ENCODE measurements at regions of chr20 and their contacts with region 1.

Region 1: GRCh38 chr20:19974626-19975435 is 42.3 kb upstream of the NAA20 start:
- DNase-seq: peak; percentile 84 to 93
- H3K4me3 ChIP-seq: peak overlapping the region; percentile 93
- H3K27ac ChIP-seq: peak overlapping the region; percentile 95
- H3K4me1 ChIP-seq: peaks cover 47% of the 10 kb centered on the region
- H3K27me3 ChIP-seq: no peaks in the 10 kb centered on the region
- CTCF ChIP-seq: no peak

Region 2: GRCh38 chr20:19692685-19693119 is 282.1 kb before region 1 on chr20:
- CTCF ChIA-PET with region 1: no interaction called
- POLR2A ChIA-PET with region 1: no interaction called
- intact Hi-C with region 1: loop called (anchors 2 kb)
- DNase-seq: peak; percentile 70 to 72
- H3K4me3 ChIP-seq: peak overlapping the region; percentile 34; the same call in 1 of the 2 replicates
- H3K27ac ChIP-seq: peak overlapping the region; percentile 45
- H3K4me1 ChIP-seq: peaks cover 10% of the 10 kb centered on the region
- H3K27me3 ChIP-seq: no peaks in the 10 kb centered on the region
- CTCF ChIP-seq: peak; percentile 98

Region 3: GRCh38 chr20:19757487-19758132 is 217.2 kb before region 1 on chr20:
- CTCF ChIA-PET with region 1: interaction called, 4 read pairs
- POLR2A ChIA-PET with region 1: interaction called, 5 read pairs
- intact Hi-C with region 1: loop called (anchors 2 kb)
- DNase-seq: peak; percentile 71 to 79
- H3K4me3 ChIP-seq: peak overlapping the region; percentile 82
- H3K27ac ChIP-seq: peak overlapping the region; percentile 99
- H3K4me1 ChIP-seq: peaks cover 38% of the 10 kb centered on the region
- H3K27me3 ChIP-seq: no peaks in the 10 kb centered on the region
- CTCF ChIP-seq: no peak

Region 4: DNA sequence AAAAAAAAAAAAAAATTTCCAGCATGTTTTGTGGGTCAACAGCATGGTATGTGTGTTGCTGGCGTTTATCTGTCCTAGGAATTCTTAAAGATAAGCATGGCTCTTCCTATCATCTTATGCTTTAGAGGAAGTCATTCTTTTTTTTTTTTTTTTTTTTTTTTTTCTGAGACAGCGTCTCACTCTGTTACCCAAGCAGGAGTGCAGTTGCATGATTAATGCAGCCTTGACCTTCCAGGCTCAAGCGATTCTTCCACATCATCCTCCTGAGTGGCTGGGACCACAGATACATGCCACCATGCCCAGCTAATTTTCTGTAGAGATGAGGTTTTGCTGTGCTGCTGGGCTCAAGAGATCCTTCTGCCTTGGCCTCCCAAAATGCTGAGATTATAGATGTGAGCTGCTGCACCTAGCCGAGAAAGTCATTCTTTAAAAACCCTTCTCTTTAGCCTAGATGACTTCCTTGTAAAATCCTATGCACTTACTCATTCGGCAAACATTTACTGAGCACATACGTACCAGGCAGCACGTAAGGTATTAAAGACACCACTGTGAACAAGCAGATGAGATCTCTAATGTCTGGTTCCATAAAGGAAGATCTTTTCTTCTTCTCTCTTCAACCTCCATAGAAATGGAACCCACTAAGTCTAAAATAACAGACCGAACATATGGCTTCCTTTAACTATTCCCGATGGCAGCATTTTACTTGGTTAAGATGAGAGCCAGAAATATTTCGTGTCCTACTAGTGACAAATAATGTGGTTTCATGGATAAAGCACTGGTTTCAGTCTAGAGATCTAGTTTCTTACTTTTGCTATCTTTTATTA is 94.4 kb before region 1 on chr20:
- CTCF ChIA-PET with region 1: interaction called, 3 read pairs
- POLR2A ChIA-PET with region 1: interaction called, 4 read pairs
- intact Hi-C with region 1: loop called (anchors 1 kb)
- DNase-seq: peak; percentile 54 to 94
- H3K4me3 ChIP-seq: peak overlapping the region; percentile 38; the same call in 1 of the 2 replicates
- H3K27ac ChIP-seq: peak overlapping the region; percentile 96
- H3K4me1 ChIP-seq: peaks cover 58% of the 10 kb centered on the region
- H3K27me3 ChIP-seq: no peaks in the 10 kb centered on the region
- CTCF ChIP-seq: no peak

Region 5: GRCh38 chr20:19934792-19935491 is 39.9 kb before region 1 on chr20:
- CTCF ChIA-PET with region 1: interaction called, 4 read pairs
- POLR2A ChIA-PET with region 1: interaction called, 12 read pairs
- intact Hi-C with region 1: loop called (anchors 2 kb)
- DNase-seq: peak; percentile 62 to 73
- H3K4me3 ChIP-seq: peak overlapping the region; percentile 48; the same call in 1 of the 2 replicates
- H3K27ac ChIP-seq: peak overlapping the region; percentile 86
- H3K4me1 ChIP-seq: peaks cover 32% of the 10 kb centered on the region
- H3K27me3 ChIP-seq: no peaks in the 10 kb centered on the region
- CTCF ChIP-seq: no peak

Region 6: GRCh38 chr20:20017001-20017843 is 42.4 kb after region 1 on chr20 and contains the start of gene NAA20:
- CTCF ChIA-PET with region 1: no interaction called
- POLR2A ChIA-PET with region 1: interaction called, 8 read pairs
- intact Hi-C with region 1: loop called (anchors 2 kb)
- DNase-seq: peak; percentile 85 to 96
- H3K4me3 ChIP-seq: peak within 1 kb of the TSS; percentile 99
- H3K27ac ChIP-seq: peak within 1 kb of the TSS; percentile 74
- H3K4me1 ChIP-seq: peaks cover 26% of the 10 kb centered on the region
- H3K27me3 ChIP-seq: no peaks in the 10 kb centered on the region
- CTCF ChIP-seq: peak; percentile 51; the same call in 1 of the 2 replicates
- total RNA-seq, gene NAA20: 167 and 168 TPM in 2 replicates

Region 7: GRCh38 chr20:20407891-20408805 is 433.3 kb after region 1 on chr20:
- CTCF ChIA-PET with region 1: no interaction called
- POLR2A ChIA-PET with region 1: no interaction called
- intact Hi-C with region 1: no loop called
- DNase-seq: no peak
- H3K4me3 ChIP-seq: no peak overlapping the region
- H3K27ac ChIP-seq: no peak overlapping the region
- H3K4me1 ChIP-seq: no peaks in the 10 kb centered on the region
- H3K27me3 ChIP-seq: no peaks in the 10 kb centered on the region
- CTCF ChIP-seq: peak; percentile 55

Measured in PC-9 (cell line).